ENCODE measurements at regions of chr1 and their contacts with region 1.

Region 1: DNA sequence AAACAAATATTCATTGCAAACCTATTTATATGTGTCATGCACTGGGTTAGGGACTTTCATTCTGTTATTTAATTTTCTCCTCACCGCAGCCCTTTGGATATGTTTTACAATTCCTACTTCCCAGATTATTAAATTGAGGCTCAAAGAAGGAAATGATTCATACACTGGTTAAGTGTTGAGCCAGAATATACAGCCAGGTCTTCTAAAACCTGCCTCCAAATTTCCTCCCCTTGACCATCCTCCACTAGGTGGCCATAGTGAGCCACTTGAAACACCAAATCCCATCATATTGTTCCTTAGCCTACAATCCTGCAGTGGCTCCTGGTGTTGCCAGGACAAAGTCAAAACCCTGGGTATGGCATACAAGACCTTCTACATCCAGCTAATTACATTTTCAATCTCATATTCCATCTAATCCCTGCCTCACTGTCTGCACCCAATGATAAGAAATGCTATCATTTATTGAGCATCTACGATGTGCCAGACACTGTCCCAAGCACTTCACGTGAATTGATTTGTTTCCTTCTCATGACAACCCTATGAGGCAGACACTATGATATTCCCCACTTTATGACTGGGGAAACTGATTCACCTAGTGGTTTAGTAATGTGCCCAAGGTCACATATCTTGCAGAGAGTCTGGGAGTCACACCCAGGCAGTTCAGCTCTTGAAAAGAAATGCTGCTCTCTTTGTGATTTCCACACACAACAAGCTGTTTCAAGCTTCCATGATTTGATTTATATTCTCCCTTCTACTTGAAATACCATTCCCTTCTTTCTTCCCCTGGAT is 23.6 kb upstream of the KIRREL1 start:
- DNase-seq: peak; percentile 39 to 73 (median 50)
- H3K4me3 ChIP-seq: no peak overlapping the region
- H3K27ac ChIP-seq: no peak overlapping the region
- H3K4me1 ChIP-seq: peaks cover 0 to 14% of the 10 kb centered on the region in 2 donors
- H3K27me3 ChIP-seq: no peaks in the 10 kb centered on the region
- CTCF ChIP-seq: peak; percentile 60 to 74 (median 69)
- POLR2A ChIP-seq: no peak

Region 2: GRCh38 chr1:157725221-157725577 is 244.7 kb before region 1 on chr1:
- intact Hi-C with region 1: no loop called
- DNase-seq: no peak
- H3K4me3 ChIP-seq: no peak overlapping the region
- H3K27ac ChIP-seq: no peak overlapping the region
- H3K4me1 ChIP-seq: no peaks in the 10 kb centered on the region
- H3K27me3 ChIP-seq: no peaks in the 10 kb centered on the region
- CTCF ChIP-seq: no peak
- POLR2A ChIP-seq: no peak

Region 3: DNA sequence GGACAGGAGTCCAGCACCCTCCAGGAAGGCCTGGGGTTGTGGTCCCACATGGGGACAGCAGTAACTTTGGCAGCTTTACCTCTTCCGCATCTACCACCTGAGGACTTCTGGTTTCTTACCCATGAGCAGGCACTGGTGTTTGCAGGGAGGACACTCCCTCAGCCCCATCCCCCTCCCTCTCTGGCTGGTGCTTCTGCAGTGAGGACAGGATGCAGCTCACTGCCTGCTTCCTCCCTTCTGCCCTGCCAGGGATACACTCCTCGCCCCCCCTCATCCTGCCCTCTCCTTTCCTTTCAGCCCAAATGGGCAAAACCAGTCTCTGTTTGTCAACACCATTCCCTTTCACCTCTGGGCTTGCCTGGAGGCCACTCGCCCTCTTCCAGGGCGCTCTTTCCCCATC is 86.0 kb after region 1 on chr1:
- intact Hi-C with region 1: no loop called
- DNase-seq: peak in 5 of 7 donors; percentile 22 to 68 (median 38)
- H3K4me3 ChIP-seq: no peak overlapping the region
- H3K27ac ChIP-seq: no peak overlapping the region
- H3K4me1 ChIP-seq: peaks cover 0 to 8% of the 10 kb centered on the region in 2 donors
- H3K27me3 ChIP-seq: no peaks in the 10 kb centered on the region
- CTCF ChIP-seq: no peak
- POLR2A ChIP-seq: no peak

Region 4: DNA sequence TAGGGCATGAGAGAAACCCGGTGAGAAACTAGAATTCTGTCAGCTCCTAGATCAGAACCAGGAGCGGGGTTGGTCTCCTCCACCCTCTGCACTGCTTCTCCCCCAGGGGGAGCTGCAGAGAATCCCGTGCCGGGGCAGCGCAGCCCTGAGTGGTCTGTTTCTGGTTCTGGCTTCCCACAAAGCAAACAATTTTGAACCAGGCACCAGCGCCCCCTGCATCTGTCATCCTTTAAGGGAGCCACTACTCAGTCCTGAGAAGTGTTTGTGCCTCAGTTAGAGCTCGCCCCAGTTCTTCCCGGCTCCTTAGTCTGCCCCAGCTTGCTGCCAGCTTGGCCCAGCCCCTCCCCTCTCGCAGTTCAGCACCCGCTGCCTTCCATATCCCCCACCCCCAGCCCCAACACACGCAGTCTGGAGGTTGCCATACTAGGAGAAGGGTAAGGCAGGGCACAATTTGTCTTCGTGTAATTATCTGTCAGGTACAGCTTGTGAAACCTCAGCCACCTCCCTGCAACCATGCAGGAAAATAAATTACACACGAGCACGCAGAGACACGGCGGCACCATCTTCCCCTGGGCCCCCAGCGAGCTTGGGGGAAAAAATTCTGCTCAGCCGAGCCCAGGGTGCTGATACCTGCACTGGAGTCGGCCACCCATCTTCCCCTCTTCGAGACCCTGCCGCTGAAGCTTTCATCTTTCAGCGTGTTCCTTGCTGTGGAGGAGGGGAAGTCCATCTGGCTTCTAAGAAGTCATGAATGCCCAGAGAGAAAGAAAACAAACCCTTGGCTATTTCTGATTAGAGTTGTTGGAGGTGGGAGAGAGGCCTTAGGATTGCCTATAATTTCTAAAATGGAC is 148.2 kb after region 1 on chr1:
- intact Hi-C with region 1: loop called in 1 of 2 experiments (anchors 5 kb)
- DNase-seq: peak in 6 of 7 donors; percentile 30 to 67 (median 54)
- H3K4me3 ChIP-seq: peak overlapping the region in 1 of 4 donors; percentile 2
- H3K27ac ChIP-seq: no peak overlapping the region
- H3K4me1 ChIP-seq: peaks cover 3 to 9% of the 10 kb centered on the region in 2 donors
- H3K27me3 ChIP-seq: peaks cover 33% of the 10 kb centered on the region
- CTCF ChIP-seq: peak; percentile 25 to 48 (median 38)
- POLR2A ChIP-seq: no peak

Region 5: DNA sequence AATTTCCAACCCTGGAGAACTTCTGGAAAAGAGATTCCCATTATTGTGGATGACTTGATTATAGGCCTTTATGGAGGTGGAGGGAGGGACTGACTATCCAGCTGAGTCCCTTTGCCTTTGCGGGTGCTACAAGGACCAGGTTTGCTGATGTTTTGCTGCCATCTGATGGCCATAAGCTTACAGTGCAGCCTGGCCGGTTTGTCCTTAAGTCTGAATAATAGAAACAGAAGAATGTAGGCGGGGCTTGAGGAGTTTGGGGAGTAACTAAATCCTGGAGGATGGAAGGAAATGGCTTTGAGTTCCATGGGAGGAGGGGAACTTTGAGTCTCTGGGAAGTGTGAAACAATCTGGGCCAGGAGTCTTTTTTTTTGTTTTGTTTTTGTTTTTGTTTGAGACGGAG is 155.1 kb after region 1 on chr1:
- intact Hi-C with region 1: loop called in 1 of 2 experiments (anchors 5 kb)
- DNase-seq: peak; percentile 81 to 98 (median 93)
- H3K4me3 ChIP-seq: no peak overlapping the region
- H3K27ac ChIP-seq: no peak overlapping the region
- H3K4me1 ChIP-seq: no peaks in the 10 kb centered on the region
- H3K27me3 ChIP-seq: peaks cover 7% of the 10 kb centered on the region
- CTCF ChIP-seq: peak; percentile 89 to 99 (median 98)
- POLR2A ChIP-seq: no peak

Region 6: GRCh38 chr1:158140764-158141192 is 170.9 kb after region 1 on chr1:
- intact Hi-C with region 1: no loop called
- DNase-seq: no peak
- H3K4me3 ChIP-seq: no peak overlapping the region
- H3K27ac ChIP-seq: no peak overlapping the region
- H3K4me1 ChIP-seq: peaks cover 9 to 11% of the 10 kb centered on the region in 2 donors
- H3K27me3 ChIP-seq: no peaks in the 10 kb centered on the region
- CTCF ChIP-seq: no peak
- POLR2A ChIP-seq: no peak

Measured in adrenal gland (tissue), 19 donors.